Mammary epithelial cell (primary cell): ENCODE measurements at regions of chr17 and their contacts with region 1.

Region 1: DNA sequence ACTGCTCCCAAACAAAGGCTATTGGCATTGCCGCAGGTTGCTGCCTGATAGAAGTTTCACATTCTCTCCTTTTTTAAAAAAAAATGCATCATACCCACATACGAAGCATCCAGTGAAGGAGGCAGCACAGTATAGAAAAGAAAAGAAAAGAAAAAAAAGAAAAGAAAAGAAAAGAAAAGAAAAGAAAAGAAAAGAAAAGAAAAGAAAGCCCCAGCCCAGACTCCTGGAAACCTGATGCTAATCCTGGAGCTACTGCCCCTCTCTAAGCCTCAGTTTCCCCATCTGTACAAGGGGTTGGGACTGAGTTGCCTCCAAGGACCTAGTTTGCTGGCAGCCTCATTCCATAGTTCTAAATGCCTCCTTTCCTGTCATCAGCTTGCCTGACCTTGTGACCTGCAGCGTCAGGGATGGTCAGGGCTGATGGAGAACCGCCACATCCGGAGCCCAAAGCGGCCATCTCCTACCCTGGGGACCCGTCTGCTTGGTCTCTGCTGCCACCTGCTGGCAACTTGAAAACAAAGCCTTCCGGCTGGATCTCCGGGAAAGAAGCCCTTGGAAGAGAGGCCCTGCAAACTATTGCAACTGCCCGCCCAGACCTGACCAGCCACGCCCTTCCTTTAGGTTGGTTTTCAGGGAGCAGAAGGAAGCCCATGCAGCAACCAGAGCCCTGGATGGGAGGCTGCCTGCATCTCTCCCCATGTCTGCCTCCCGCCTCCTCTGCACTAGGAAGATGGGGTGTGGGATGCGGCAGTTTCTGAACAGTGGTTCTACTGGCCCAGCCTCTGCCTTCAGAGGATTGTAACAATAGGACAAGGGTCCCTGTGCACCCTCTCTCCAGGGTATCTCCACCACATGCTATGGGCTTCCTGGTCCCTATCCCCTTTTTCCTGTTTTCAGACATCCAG is 13.0 kb downstream of the AIPL1 start:
- DNase-seq: peak; percentile 70
- H3K4me3 ChIP-seq: no peak overlapping the region
- H3K27ac ChIP-seq: no peak overlapping the region
- H3K4me1 ChIP-seq: no peaks in the 10 kb centered on the region
- H3K27me3 ChIP-seq: no peaks in the 10 kb centered on the region
- CTCF ChIP-seq: peak; percentile 71 to 95

Region 2: GRCh38 chr17:4903051-4903818 is 1518.7 kb before region 1 on chr17 and contains the start of gene CHRNE:
- CTCF ChIA-PET with region 1: no interaction called
- dilution Hi-C with region 1: no loop called
- in situ Hi-C with region 1: no loop called
- intact Hi-C with region 1: loop called (anchors 10 kb)
- DNase-seq: peak; percentile 73
- H3K4me3 ChIP-seq: no peak within 1 kb of the TSS
- H3K27ac ChIP-seq: no peak within 1 kb of the TSS
- H3K4me1 ChIP-seq: peaks cover 15% of the 10 kb centered on the region
- H3K27me3 ChIP-seq: no peaks in the 10 kb centered on the region
- CTCF ChIP-seq: peak; percentile 80 to 81
- total RNA-seq, gene CHRNE: under 0.01 TPM in 1 of 2 donors, not detected in the other

Region 3: GRCh38 chr17:5775098-5775497 is 646.9 kb before region 1 on chr17:
- CTCF ChIA-PET with region 1: no interaction called
- dilution Hi-C with region 1: no loop called
- in situ Hi-C with region 1: no loop called
- intact Hi-C with region 1: loop called (anchors 5 kb)
- DNase-seq: no peak
- H3K4me3 ChIP-seq: no peak overlapping the region
- H3K27ac ChIP-seq: no peak overlapping the region
- H3K4me1 ChIP-seq: peaks cover 11% of the 10 kb centered on the region
- H3K27me3 ChIP-seq: peaks cover 16% of the 10 kb centered on the region
- CTCF ChIP-seq: no peak

Region 4: DNA sequence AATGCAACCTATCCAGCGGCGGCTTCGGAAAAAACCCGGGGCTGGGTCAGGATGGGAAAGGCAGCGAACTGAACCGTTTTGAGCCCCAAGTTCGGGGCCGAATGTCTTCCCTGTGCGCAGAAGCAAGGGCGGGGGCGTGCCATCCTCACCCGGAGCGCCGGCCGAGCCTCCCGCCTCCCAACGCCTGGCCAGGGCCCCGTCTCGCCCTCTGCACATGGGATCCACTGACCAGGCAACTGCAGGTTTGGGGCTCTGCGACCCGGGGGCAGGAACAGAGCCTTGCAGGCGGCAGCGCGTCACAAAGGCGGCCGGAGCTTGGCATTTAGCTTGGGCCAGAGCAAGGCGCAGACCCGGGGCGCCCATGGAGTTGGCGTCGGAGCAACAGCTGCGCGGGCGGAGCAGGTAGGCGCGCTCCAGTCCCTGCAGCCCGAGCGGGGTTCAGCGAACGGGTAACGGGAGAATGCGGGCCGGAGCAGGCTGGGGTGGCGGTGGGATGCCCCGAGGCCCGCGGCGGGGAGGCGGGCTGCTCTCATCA is 354.0 kb after region 1 on chr17 and contains the start of gene FBXO39:
- CTCF ChIA-PET with region 1: no interaction called
- dilution Hi-C with region 1: no loop called
- in situ Hi-C with region 1: no loop called
- intact Hi-C with region 1: no loop called
- DNase-seq: no peak
- H3K4me3 ChIP-seq: peak within 1 kb of the TSS in 1 of 3 experiments; percentile 40
- H3K27ac ChIP-seq: no peak within 1 kb of the TSS
- H3K4me1 ChIP-seq: peaks cover 14% of the 10 kb centered on the region
- H3K27me3 ChIP-seq: no peaks in the 10 kb centered on the region
- CTCF ChIP-seq: no peak
- total RNA-seq, gene FBXO39: 0.56 to 0.67 TPM